ENCODE measurements at regions of chr20 and their contacts with region 1.

Region 1: DNA sequence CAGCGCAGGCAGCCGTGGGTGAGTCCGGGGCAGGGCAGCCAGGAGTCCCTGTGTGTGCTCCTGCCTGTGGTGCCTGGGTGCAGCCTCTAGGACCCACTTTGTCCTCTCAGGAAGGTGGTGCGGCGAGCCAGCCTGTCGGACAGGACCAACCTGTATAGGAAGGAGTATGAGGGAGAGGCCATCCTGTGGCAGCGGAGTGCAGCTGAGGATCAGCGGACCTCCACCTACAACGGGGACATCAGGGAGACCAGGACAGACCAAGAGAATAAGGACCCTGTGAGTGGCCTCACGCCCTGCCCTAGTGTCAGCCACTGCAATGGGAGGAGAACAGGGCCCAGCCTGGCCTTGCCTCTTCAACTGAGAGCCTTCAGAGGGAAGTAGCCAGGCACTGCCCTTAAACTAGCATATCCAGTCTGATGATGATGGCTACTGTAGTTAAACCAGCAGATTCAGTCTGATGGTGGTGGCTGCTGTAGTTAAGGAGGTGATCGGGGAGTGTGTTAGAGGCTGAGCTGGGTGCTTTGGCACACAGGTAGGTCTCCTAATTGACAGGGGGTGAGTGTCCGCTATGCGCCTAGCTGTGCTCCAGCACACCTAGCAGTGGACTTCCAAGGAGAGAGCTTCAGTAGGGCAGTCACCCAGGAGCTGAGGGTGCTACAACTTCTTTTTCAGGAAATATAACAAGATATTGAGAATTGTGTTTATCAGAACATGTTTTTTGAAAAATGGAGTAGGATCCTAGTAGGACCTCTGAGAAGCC is 18.1 kb upstream of the FAM83D start:
- DNase-seq: no peak
- CTCF ChIP-seq: no peak

Region 2: GRCh38 chr20:38559764-38560163 is 348.3 kb before region 1 on chr20:
- CTCF ChIA-PET with region 1: no interaction called
- POLR2A ChIA-PET with region 1: no interaction called
- DNase-seq: no peak
- CTCF ChIP-seq: no peak

Region 3: DNA sequence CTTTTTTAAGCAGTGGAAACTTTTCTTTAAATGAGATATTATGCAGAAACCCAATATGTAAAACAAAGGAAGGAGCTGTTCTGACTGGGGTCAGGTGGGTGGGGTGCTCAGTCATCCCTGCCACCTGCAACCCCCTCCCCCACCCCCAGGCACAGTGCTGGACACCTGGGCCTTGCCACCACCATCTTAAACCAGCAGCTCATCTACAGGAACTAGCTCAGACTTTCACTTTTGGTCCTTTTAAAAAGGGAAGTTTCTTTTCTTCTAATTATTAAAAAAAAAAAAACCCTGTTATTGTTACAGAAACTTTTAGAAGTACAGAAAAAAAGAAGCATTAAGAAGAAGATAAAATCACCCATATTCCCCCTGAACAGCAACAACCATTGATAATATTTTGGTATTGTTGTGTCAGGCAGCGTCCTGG is 65.5 kb before region 1 on chr20:
- CTCF ChIA-PET with region 1: no interaction called
- POLR2A ChIA-PET with region 1: no interaction called
- DNase-seq: peak; percentile 88
- CTCF ChIP-seq: no peak

Region 4: DNA sequence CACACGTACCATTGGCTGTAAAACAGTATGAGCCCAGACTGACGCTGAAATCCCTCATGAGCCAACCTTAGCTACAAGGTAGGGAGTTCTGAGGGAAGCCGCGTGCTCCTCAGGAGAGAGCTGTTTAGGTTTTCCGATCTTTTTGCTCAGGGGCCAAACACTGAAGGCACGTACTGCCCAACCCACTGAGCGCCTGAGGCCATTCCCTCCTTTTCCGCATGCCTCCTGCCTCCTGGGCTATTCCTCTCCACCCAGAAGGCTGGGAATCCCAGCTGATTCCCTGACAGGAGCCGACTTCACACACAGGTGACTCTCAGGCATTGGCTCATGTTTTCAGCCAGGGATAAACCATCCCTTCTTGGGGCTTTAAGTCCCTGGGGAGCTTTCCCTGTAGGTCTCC is 12.8 kb after region 1 on chr20:
- CTCF ChIA-PET with region 1: interaction called, 15 read pairs
- POLR2A ChIA-PET with region 1: no interaction called
- DNase-seq: no peak
- CTCF ChIP-seq: no peak

Region 5: GRCh38 chr20:38926142-38926933 is 18.2 kb after region 1 on chr20 and contains the start of gene FAM83D:
- CTCF ChIA-PET with region 1: interaction called, 11 read pairs
- POLR2A ChIA-PET with region 1: no interaction called
- DNase-seq: peak; percentile 100
- CTCF ChIP-seq: no peak